Sigmoid colon (tissue), 7 donors: ENCODE measurements at regions of chr12 and their contacts with region 1.

Region 1: GRCh38 chr12:52278541-52279421 is 4.3 kb downstream of the KRT86 start:
- DNase-seq: peak; percentile 89
- H3K4me3 ChIP-seq: peak overlapping the region in 3 of 4 donors; percentile 31 to 44 (median 38)
- H3K27ac ChIP-seq: peak overlapping the region; percentile 84 to 95 (median 86)
- H3K4me1 ChIP-seq: peaks cover 0 to 34% (median 32%) of the 10 kb centered on the region in 4 donors
- H3K27me3 ChIP-seq: no peaks in the 10 kb centered on the region
- CTCF ChIP-seq: peak; percentile 72 to 94 (median 91)
- EP300 ChIP-seq: no peak
- POLR2A ChIP-seq: no peak

Region 2: DNA sequence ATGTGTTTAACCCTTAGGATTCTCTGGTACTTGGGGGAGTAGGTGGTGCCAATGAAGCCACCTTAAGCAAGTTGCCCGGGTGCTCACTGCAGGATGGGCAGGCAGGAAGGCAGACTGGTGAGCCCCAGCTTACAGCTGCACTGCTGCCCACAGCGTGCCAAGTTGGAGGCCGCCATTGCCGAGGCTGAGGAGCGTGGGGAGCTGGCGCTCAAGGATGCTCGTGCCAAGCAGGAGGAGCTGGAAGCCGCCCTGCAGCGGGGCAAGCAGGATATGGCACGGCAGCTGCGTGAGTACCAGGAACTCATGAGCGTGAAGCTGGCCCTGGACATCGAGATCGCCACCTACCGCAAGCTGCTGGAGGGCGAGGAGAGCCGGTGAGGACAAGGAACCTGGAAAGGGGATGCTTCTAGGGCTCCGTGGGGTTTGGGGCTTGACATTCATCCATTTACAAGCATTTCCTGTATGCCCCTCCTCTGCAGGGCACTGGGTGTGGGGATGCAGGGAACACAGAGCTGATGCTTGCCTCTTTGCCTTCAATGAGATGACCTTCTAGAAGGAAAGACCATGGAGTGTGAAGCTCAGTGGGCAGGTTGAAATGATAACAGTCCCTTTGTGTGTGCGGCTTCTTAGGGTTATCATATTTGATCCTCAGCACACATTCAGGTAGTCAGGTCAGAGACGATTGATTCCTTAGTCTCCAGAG is 33.4 kb before region 1 on chr12:
- intact Hi-C with region 1: loop called (anchors 1 kb)
- DNase-seq: peak; percentile 64
- H3K4me3 ChIP-seq: no peak overlapping the region
- H3K27ac ChIP-seq: peak overlapping the region in 3 of 4 donors; percentile 50 to 84 (median 82)
- H3K4me1 ChIP-seq: peaks cover 0 to 69% (median 54%) of the 10 kb centered on the region in 4 donors
- H3K27me3 ChIP-seq: no peaks in the 10 kb centered on the region
- CTCF ChIP-seq: no peak
- EP300 ChIP-seq: no peak
- POLR2A ChIP-seq: no peak